Activated naive CD4-positive, alpha-beta T cell treated with anti-CD3 and anti-CD28 coated beads for 36 hours (primary cell): ENCODE measurements at regions of chr18 and their contacts with region 1.

Region 1: GRCh38 chr18:9334329-9334972 is at the start of gene TWSG1:
- DNase-seq: peak; percentile 91
- H3K4me3 Mint-ChIP-seq: peak within 1 kb of the TSS; percentile 79
- H3K27ac Mint-ChIP-seq: no peak within 1 kb of the TSS
- H3K4me1 Mint-ChIP-seq: peaks cover 13% of the 10 kb centered on the region
- H3K27me3 Mint-ChIP-seq: peaks cover 2% of the 10 kb centered on the region
- total RNA-seq, gene TWSG1: 4.9 to 5.6 TPM

Region 2: DNA sequence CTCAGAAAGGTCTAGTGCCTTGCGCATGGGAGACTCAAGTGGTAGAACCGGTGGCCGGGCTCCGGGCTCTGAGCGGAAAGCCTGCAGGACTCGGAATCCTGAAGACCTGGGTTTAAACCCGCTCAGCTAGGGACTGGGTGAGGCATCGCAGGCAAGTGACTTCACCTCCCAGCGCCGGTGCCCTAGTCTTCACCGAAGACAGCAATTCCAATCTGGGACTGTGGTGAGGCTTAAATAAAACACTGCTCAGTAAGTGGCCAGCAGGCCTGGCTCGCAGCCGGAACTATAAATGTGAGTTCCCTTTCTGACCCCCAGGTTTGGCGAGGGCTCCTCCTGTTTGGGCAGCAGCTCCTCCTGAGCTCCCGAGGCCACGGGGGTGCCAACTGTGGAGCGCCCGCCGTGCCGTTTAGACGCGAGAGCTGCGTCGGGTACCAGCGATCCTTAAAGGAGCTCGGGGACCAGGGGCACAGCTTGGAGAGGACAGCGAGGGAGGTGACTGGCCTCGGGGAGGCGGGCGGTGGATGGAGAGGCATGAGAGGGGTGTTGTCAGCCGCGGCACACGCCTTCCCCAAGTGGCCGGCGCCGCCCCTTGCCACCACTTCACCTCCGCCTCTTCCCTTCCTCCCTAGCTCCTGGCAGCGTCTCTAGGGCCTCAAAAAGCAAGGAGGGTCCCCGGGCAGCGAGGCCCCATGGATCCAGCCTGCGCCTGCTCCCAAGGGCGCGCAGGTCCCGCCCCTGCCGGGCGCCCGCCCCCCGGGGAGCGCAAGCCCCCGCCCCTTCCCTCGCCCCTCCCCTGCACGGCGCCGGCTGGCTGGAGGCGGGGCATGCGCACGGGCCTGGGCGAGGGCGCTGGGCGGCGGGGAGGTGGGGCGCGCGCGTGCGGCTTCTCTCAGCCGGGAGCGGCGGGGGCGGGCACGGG is 629.8 kb before region 1 on chr18:
- CTCF ChIA-PET with region 1: no interaction called
- intact Hi-C with region 1: loop called (anchors 2 kb)
- DNase-seq: peak; percentile 82
- H3K4me3 Mint-ChIP-seq: peak overlapping the region; percentile 80
- H3K27ac Mint-ChIP-seq: no peak overlapping the region
- H3K4me1 Mint-ChIP-seq: peaks cover 12% of the 10 kb centered on the region
- H3K27me3 Mint-ChIP-seq: peaks cover 45% of the 10 kb centered on the region

Region 3: GRCh38 chr18:9095297-9096006 is 239.0 kb before region 1 on chr18:
- CTCF ChIA-PET with region 1: no interaction called
- intact Hi-C with region 1: loop called (anchors 1 kb)
- DNase-seq: peak; percentile 88
- H3K4me3 Mint-ChIP-seq: peak overlapping the region; percentile 57
- H3K27ac Mint-ChIP-seq: peak overlapping the region; percentile 96
- H3K4me1 Mint-ChIP-seq: peaks cover 63% of the 10 kb centered on the region
- H3K27me3 Mint-ChIP-seq: no peaks in the 10 kb centered on the region

Region 4: GRCh38 chr18:9404565-9405060 is 70.2 kb after region 1 on chr18:
- CTCF ChIA-PET with region 1: interaction called, 4 read pairs
- intact Hi-C with region 1: loop called (anchors 2 kb)
- DNase-seq: peak; percentile 68
- H3K4me3 Mint-ChIP-seq: peak overlapping the region; percentile 70
- H3K27ac Mint-ChIP-seq: peak overlapping the region; percentile 57
- H3K4me1 Mint-ChIP-seq: peaks cover 10% of the 10 kb centered on the region
- H3K27me3 Mint-ChIP-seq: no peaks in the 10 kb centered on the region

Region 5: DNA sequence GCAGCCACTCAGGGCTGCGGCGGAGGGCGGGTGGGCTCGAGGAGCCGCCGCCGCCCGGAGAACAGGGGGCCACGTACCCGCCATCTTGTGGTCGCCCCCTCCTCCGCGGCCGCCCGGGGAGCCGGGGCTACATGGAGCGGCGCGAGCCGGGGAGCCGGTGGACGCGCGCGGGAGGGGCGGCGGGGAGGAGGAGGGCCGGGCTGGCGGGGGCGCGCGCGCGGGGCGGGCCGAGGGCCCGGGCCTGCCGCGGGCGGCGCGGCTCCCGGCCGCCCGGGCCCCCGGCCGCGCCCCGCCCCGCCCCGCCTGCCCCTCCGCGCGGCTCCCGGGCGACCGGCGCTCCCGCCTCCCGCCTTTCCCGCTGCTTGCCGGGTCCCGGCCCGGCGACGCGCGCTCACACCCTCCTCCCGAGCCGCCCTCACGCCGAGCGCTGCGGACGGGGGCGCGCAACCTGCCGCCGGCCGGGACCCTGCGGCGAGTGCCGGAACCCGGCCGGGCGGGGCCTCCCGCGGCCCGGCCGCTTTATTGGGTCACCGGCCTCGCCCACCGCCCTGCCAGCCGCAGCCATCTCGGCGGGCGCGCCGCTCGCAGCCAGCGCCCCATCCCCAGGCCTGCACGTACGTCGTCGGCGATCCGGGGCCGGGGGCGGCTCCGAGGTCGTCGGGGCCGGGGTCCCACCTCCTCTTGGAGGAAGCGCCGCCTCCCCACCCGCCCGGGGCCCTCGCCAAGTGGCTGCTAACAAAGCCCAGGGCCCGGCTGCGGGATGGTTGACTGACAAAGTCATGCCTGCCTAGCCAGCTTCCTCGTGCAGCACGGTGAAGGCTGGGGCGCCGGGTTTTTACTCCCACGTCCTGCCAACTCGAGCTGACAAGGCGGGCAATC is 280.2 kb after region 1 on chr18 and contains the start of gene PPP4R1:
- CTCF ChIA-PET with region 1: no interaction called
- intact Hi-C with region 1: loop called (anchors 2 kb)
- DNase-seq: peak; percentile 71
- H3K4me3 Mint-ChIP-seq: peak within 1 kb of the TSS; percentile 93
- H3K27ac Mint-ChIP-seq: peak within 1 kb of the TSS; percentile 77
- H3K4me1 Mint-ChIP-seq: peaks cover 29% of the 10 kb centered on the region
- H3K27me3 Mint-ChIP-seq: no peaks in the 10 kb centered on the region
- total RNA-seq, gene PPP4R1: 23.0 to 23.6 TPM